Naive thymus-derived CD4-positive, alpha-beta T cell (primary cell): ENCODE measurements at regions of chr18 and their contacts with region 1.

Region 1: DNA sequence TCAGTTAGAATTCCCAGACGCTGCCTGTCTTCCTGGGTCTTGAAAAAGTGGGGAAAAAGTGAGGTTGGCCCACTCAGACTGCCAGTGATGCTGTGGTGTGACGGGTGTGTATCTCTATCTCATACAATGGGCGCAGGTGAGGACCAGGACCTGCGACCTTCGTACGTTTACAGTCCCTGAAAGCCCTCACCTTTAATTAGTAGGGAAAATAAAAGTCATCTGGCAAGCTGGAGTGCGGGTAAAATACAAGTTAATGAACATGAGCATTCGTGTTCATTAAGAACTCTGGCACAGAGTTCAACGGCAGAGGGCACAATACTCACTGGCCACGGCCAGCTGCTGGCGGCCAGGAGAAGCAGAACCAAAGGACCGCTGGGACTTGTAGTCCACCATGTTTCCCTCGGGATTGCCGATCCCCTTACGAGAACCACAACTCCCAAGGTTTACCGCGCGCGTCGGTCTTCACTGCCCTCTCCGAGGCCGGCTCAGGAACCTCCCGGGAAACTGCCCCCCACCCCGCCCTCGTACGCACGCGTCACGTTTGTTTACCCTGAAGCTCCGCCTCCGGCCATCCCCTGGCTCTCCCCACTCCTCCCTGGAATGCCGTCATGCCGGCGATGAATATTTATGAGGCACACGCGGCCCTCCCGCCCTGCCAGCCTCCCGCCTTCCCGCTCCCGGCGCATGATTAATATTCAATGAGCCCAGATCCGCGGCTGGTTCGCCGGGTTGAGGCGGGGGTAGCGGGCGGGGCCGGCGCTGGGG is 488 bp upstream of the PHLPP1 start:
- DNase-seq: peak; percentile 82 to 91 (median 88)
- ATAC-seq: peak; percentile 86
- H3K4me3 ChIP-seq: peak overlapping the region; percentile 84
- H3K4me3 Mint-ChIP-seq: peak overlapping the region; percentile 80 to 96 (median 90)
- H3K27ac ChIP-seq: peak overlapping the region; percentile 78
- H3K27ac Mint-ChIP-seq: peak overlapping the region; percentile 84 to 99 (median 95)
- H3K4me1 ChIP-seq: peaks cover 0 to 12% of the 10 kb centered on the region in 2 donors
- H3K4me1 Mint-ChIP-seq: peaks cover 11 to 34% (median 30%) of the 10 kb centered on the region in 7 donors
- H3K27me3 ChIP-seq: no peaks in the 10 kb centered on the region
- H3K27me3 Mint-ChIP-seq: peaks cover 0 to 22% (median 0%) of the 10 kb centered on the region in 5 donors

Region 2: GRCh38 chr18:61719671-61720070 is 995.2 kb before region 1 on chr18:
- CTCF ChIA-PET with region 1: no interaction called
- POLR2A ChIA-PET with region 1: no interaction called
- intact Hi-C with region 1: no loop called
- DNase-seq: no peak
- ATAC-seq: no peak
- H3K4me3 ChIP-seq: no peak overlapping the region
- H3K4me3 Mint-ChIP-seq: no peak overlapping the region
- H3K27ac ChIP-seq: no peak overlapping the region
- H3K27ac Mint-ChIP-seq: no peak overlapping the region
- H3K4me1 ChIP-seq: no peaks in the 10 kb centered on the region
- H3K4me1 Mint-ChIP-seq: no peaks in the 10 kb centered on the region
- H3K27me3 ChIP-seq: no peaks in the 10 kb centered on the region
- H3K27me3 Mint-ChIP-seq: peaks cover 4 to 16% (median 11%) of the 10 kb centered on the region in 5 donors

Region 3: GRCh38 chr18:62186774-62187542 is 527.9 kb before region 1 on chr18 and contains the starts of genes PIGN and RELCH:
- CTCF ChIA-PET with region 1: no interaction called
- POLR2A ChIA-PET with region 1: no interaction called
- intact Hi-C with region 1: loop called (anchors 1 kb)
- DNase-seq: peak; percentile 73 to 98 (median 96)
- ATAC-seq: peak; percentile 97
- H3K4me3 ChIP-seq: peak within 1 kb of the TSS; percentile 97
- H3K4me3 Mint-ChIP-seq: peak within 1 kb of the TSS; percentile 96 to 100 (median 99)
- H3K27ac ChIP-seq: peak within 1 kb of the TSS; percentile 74
- H3K27ac Mint-ChIP-seq: peak within 1 kb of the TSS; percentile 91 to 98 (median 96)
- H3K4me1 ChIP-seq: peaks cover 18 to 21% of the 10 kb centered on the region in 2 donors
- H3K4me1 Mint-ChIP-seq: peaks cover 48 to 76% (median 69%) of the 10 kb centered on the region in 7 donors
- H3K27me3 ChIP-seq: no peaks in the 10 kb centered on the region
- H3K27me3 Mint-ChIP-seq: no peaks in the 10 kb centered on the region
- total RNA-seq, gene PIGN: 18.2 to 29.8 (median 28.2) TPM
- total RNA-seq, gene RELCH: 51.3 to 70.8 (median 62.1) TPM

Region 4: DNA sequence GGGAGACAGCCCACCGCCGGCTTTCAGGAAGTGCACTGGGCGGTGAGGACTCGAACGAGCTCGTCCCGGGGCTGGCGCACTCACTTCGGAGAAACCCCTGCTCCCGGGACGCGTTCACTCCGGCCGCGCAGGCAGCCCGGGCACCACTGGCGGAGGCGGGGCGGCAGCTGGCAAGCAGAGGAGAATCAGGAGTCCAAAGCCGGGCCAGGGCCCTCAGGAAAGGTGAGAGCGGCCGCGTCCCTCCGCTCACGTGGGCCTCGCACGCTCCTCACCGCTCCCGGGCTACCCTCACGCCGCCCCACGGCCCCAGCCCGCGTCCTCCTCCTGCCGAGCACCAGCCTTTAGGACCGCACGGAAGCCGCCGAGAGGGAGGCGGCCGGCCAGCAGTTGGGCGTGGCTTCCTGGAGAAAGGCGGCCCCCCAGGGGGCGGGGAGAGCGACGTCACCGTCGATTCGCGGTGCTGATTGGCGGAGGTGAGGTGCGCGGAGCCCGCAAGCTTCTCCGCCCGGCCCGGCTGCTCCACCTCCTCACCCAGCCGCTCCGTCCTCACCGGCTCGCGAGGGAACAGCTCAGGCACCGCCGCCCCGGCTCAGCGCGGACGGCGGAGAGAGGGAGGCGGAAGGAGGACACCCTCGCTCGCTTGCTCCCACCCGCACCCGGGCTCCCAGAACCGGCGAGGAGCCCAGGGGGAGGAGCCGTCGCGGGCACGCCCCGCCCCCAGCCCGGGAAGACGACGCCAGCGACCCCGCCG is 192.2 kb before region 1 on chr18 and contains the start of gene ZCCHC2:
- CTCF ChIA-PET with region 1: no interaction called
- POLR2A ChIA-PET with region 1: interaction called, 6 read pairs
- intact Hi-C with region 1: loop called (anchors 1 kb)
- DNase-seq: peak; percentile 96 to 100 (median 99)
- ATAC-seq: peak; percentile 88
- H3K4me3 ChIP-seq: peak within 1 kb of the TSS; percentile 81
- H3K4me3 Mint-ChIP-seq: peak within 1 kb of the TSS; percentile 91 to 98 (median 96)
- H3K27ac ChIP-seq: peak within 1 kb of the TSS; percentile 88
- H3K27ac Mint-ChIP-seq: peak within 1 kb of the TSS; percentile 62 to 97 (median 93)
- H3K4me1 ChIP-seq: peaks cover 23 to 26% of the 10 kb centered on the region in 2 donors
- H3K4me1 Mint-ChIP-seq: peaks cover 21 to 44% (median 37%) of the 10 kb centered on the region in 7 donors
- H3K27me3 ChIP-seq: no peaks in the 10 kb centered on the region
- H3K27me3 Mint-ChIP-seq: no peaks in the 10 kb centered on the region
- total RNA-seq, gene ZCCHC2: 51.1 to 68.5 (median 63.1) TPM

Region 5: GRCh38 chr18:62784966-62785413 is 70.1 kb after region 1 on chr18:
- CTCF ChIA-PET with region 1: no interaction called
- POLR2A ChIA-PET with region 1: no interaction called
- intact Hi-C with region 1: loop called in 1 of 2 experiments (anchors 5 kb)
- DNase-seq: no peak
- ATAC-seq: no peak
- H3K4me3 ChIP-seq: no peak overlapping the region
- H3K4me3 Mint-ChIP-seq: peak overlapping the region in 2 of 10 donors; percentile 3 to 22
- H3K27ac ChIP-seq: no peak overlapping the region
- H3K27ac Mint-ChIP-seq: no peak overlapping the region
- H3K4me1 ChIP-seq: peaks cover 0 to 10% of the 10 kb centered on the region in 2 donors
- H3K4me1 Mint-ChIP-seq: peaks cover 27 to 49% (median 33%) of the 10 kb centered on the region in 7 donors
- H3K27me3 ChIP-seq: no peaks in the 10 kb centered on the region
- H3K27me3 Mint-ChIP-seq: peaks cover 0 to 2% (median 0%) of the 10 kb centered on the region in 5 donors

Region 6: GRCh38 chr18:62957885-62958472 is 243.1 kb after region 1 on chr18:
- CTCF ChIA-PET with region 1: interaction called, 3 read pairs
- POLR2A ChIA-PET with region 1: interaction called, 3 read pairs
- intact Hi-C with region 1: loop called (anchors 1 kb)
- DNase-seq: peak in 6 of 9 donors; percentile 18 to 46 (median 28)
- ATAC-seq: peak; percentile 64
- H3K4me3 ChIP-seq: no peak overlapping the region
- H3K4me3 Mint-ChIP-seq: no peak overlapping the region
- H3K27ac ChIP-seq: no peak overlapping the region
- H3K27ac Mint-ChIP-seq: no peak overlapping the region
- H3K4me1 ChIP-seq: peaks cover 0 to 17% of the 10 kb centered on the region in 2 donors
- H3K4me1 Mint-ChIP-seq: peaks cover 11 to 22% (median 17%) of the 10 kb centered on the region in 7 donors
- H3K27me3 ChIP-seq: no peaks in the 10 kb centered on the region
- H3K27me3 Mint-ChIP-seq: no peaks in the 10 kb centered on the region

Region 7: GRCh38 chr18:63320046-63320689 is 605.3 kb after region 1 on chr18:
- CTCF ChIA-PET with region 1: no interaction called
- POLR2A ChIA-PET with region 1: interaction called, 3 read pairs
- intact Hi-C with region 1: loop called in 1 of 2 experiments (anchors 2 kb)
- DNase-seq: peak; percentile 71 to 93 (median 90)
- ATAC-seq: peak; percentile 89
- H3K4me3 ChIP-seq: peak overlapping the region; percentile 61
- H3K4me3 Mint-ChIP-seq: peak overlapping the region; percentile 86 to 99 (median 94)
- H3K27ac ChIP-seq: peak overlapping the region; percentile 94
- H3K27ac Mint-ChIP-seq: peak overlapping the region; percentile 87 to 98 (median 94)
- H3K4me1 ChIP-seq: peaks cover 13 to 15% of the 10 kb centered on the region in 2 donors
- H3K4me1 Mint-ChIP-seq: peaks cover 21 to 45% (median 38%) of the 10 kb centered on the region in 7 donors
- H3K27me3 ChIP-seq: no peaks in the 10 kb centered on the region
- H3K27me3 Mint-ChIP-seq: no peaks in the 10 kb centered on the region

Region 8: GRCh38 chr18:63439334-63439733 is 724.5 kb after region 1 on chr18:
- CTCF ChIA-PET with region 1: no interaction called
- POLR2A ChIA-PET with region 1: no interaction called
- intact Hi-C with region 1: loop called (anchors 1 kb)
- DNase-seq: peak; percentile 12 to 64 (median 49)
- ATAC-seq: peak; percentile 81
- H3K4me3 ChIP-seq: no peak overlapping the region
- H3K4me3 Mint-ChIP-seq: no peak overlapping the region
- H3K27ac ChIP-seq: no peak overlapping the region
- H3K27ac Mint-ChIP-seq: no peak overlapping the region
- H3K4me1 ChIP-seq: no peaks in the 10 kb centered on the region
- H3K4me1 Mint-ChIP-seq: peaks cover 0 to 4% (median 3%) of the 10 kb centered on the region in 7 donors
- H3K27me3 ChIP-seq: no peaks in the 10 kb centered on the region
- H3K27me3 Mint-ChIP-seq: peaks cover 0 to 43% (median 5%) of the 10 kb centered on the region in 5 donors